HCT116 (cell line): ENCODE measurements at regions of chr9 and their contacts with region 1.

Region 1: DNA sequence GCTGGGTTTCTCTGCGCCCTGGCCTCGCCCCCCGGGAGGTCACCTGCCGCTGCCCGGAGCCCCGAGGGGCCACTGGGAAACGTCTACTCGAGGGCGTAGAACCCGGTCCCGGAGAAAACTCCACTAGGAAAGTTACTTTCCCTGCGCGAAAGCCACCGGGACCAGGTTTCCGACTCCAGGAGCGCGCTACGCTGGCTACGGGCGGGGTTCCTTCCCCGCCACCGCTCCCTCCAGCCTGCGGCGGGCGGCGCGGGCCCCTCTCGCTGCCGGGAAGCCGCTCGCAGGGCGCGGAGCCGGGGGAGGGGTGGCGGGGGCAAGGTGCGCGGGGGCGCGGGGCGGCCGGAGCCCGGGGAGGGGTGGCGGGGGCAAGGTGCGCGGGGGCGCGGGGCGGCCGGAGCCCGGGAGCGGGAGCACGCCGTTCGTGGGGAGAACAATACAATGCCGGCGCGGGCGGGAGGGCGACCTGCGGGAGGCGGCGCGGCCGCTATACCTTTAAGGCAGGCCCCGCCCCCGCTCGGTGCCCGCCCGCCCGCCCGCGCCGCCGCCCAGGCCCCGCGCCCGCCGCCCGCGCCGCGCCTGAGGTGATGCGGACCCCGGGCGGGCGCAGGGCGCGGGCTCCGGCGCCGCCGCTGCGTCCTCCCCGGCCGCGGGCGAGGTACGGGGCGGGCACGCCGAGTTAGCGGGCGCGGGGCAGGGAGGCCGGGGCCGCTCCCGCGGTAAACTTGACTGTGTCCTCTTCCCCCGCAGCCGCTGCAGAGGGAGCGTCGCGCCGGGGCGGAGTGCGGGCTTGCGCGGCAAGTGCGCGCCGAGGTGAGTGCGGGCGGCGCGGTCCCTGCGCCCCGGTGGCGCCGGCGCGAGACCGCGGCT is 278.1 kb downstream of the AOPEP start:
- DNase-seq: no peak
- ATAC-seq: peak; percentile 84
- H3K4me3 ChIP-seq: peak overlapping the region; percentile 70 to 73
- H3K27ac ChIP-seq: peak overlapping the region; percentile 75
- H3K4me1 ChIP-seq: peaks cover 6 to 22% of the 10 kb centered on the region in 2 experiments
- H3K27me3 ChIP-seq: no peaks in the 10 kb centered on the region
- CTCF ChIP-seq: no peak
- POLR2A ChIP-seq: no peak
- RAD21 ChIP-seq: no peak

Region 2: GRCh38 chr9:94490465-94490864 is 514.2 kb before region 1 on chr9:
- CTCF ChIA-PET with region 1: no interaction called
- POLR2A ChIA-PET with region 1: no interaction called
- RAD21 ChIA-PET with region 1: no interaction called
- intact Hi-C with region 1: no loop called
- DNase-seq: no peak
- ATAC-seq: no peak
- H3K4me3 ChIP-seq: no peak overlapping the region
- H3K27ac ChIP-seq: no peak overlapping the region
- H3K4me1 ChIP-seq: no peaks in the 10 kb centered on the region
- H3K27me3 ChIP-seq: no peaks in the 10 kb centered on the region
- CTCF ChIP-seq: no peak
- POLR2A ChIP-seq: no peak
- RAD21 ChIP-seq: no peak

Region 3: GRCh38 chr9:94534901-94535300 is 469.7 kb before region 1 on chr9:
- CTCF ChIA-PET with region 1: no interaction called
- POLR2A ChIA-PET with region 1: no interaction called
- RAD21 ChIA-PET with region 1: no interaction called
- intact Hi-C with region 1: no loop called
- DNase-seq: no peak
- ATAC-seq: no peak
- H3K4me3 ChIP-seq: no peak overlapping the region
- H3K27ac ChIP-seq: no peak overlapping the region
- H3K4me1 ChIP-seq: no peaks in the 10 kb centered on the region
- H3K27me3 ChIP-seq: no peaks in the 10 kb centered on the region
- CTCF ChIP-seq: no peak
- POLR2A ChIP-seq: no peak
- RAD21 ChIP-seq: no peak

Region 4: GRCh38 chr9:94867281-94867841 is 137.3 kb before region 1 on chr9:
- CTCF ChIA-PET with region 1: no interaction called
- POLR2A ChIA-PET with region 1: no interaction called
- RAD21 ChIA-PET with region 1: no interaction called
- intact Hi-C with region 1: loop called (anchors 5 kb)
- DNase-seq: peak; percentile 45
- ATAC-seq: peak; percentile 84
- H3K4me3 ChIP-seq: peak overlapping the region in 1 of 2 experiments; percentile 36; a peak in 2 of 4 replicates
- H3K27ac ChIP-seq: peak overlapping the region; percentile 62
- H3K4me1 ChIP-seq: peaks cover 47 to 58% of the 10 kb centered on the region in 2 experiments
- H3K27me3 ChIP-seq: no peaks in the 10 kb centered on the region
- CTCF ChIP-seq: no peak
- POLR2A ChIP-seq: no peak
- RAD21 ChIP-seq: no peak; the same call in 1 of the 2 replicates